Activated T-helper 1 cell treated with anti-CD3 and anti-CD28 coated beads, Interleukin-12 subunit alpha, Interleukin-12 subunit beta, Interleukin-2, Interleukin-4 antibody, amounts not matched to agents 30 ng/mL and 10 ng/mL and 1 ng/mL, durations not matched to agents 14 hours and 24 hours and 36 hours (primary cell): ENCODE measurements at regions of chr1 and their contacts with region 1.

Region 1: GRCh38 chr1:66271216-66271903 is 262.6 kb upstream of the SGIP1 start:
- DNase-seq: no peak
- H3K4me3 Mint-ChIP-seq: peak overlapping the region; percentile 38
- H3K27ac Mint-ChIP-seq: peak overlapping the region; percentile 85
- H3K4me1 Mint-ChIP-seq: peaks cover 67% of the 10 kb centered on the region
- H3K27me3 Mint-ChIP-seq: peaks cover 2% of the 10 kb centered on the region

Region 2: GRCh38 chr1:66253330-66253921 is 17.9 kb before region 1 on chr1:
- intact Hi-C with region 1: loop called (anchors 1 kb)
- DNase-seq: no peak
- H3K4me3 Mint-ChIP-seq: no peak overlapping the region
- H3K27ac Mint-ChIP-seq: no peak overlapping the region
- H3K4me1 Mint-ChIP-seq: peaks cover 68% of the 10 kb centered on the region
- H3K27me3 Mint-ChIP-seq: no peaks in the 10 kb centered on the region

Region 3: DNA sequence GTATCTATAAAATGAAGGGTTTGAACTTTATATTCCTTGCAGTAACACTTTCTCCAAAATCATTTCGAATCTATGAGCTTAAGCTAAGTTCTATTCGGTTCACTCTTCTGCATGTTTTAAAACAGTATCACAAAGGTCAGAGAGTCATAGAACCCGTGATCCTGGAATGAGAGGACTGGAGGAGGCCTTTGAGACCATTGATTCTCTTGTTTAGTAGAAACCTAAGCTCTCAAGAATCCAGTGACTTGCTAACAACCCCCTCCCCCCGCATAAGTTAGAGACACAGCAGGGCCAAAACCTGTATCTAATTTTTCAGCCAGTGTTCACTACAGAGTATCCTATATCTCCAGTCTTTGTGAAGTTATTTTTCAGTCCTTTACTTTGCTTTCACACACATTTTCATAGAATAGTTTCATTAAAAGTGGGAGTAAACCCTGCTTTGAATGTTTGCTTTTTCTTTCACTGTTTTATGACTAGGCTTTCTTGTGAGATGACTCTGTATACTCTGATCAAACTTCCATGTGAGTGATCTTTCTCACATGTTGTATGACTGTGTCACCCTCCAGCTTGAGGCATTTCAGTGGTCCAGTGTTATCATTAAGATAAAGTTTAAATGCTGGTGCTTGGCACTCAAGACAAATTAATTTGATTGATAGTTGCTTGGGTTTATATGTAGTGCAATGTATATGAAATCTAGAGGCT is 12.8 kb before region 1 on chr1:
- intact Hi-C with region 1: loop called (anchors 1 kb)
- DNase-seq: no peak
- H3K4me3 Mint-ChIP-seq: no peak overlapping the region
- H3K27ac Mint-ChIP-seq: peak overlapping the region; percentile 53
- H3K4me1 Mint-ChIP-seq: peaks cover 83% of the 10 kb centered on the region
- H3K27me3 Mint-ChIP-seq: peaks cover 2% of the 10 kb centered on the region

Region 4: DNA sequence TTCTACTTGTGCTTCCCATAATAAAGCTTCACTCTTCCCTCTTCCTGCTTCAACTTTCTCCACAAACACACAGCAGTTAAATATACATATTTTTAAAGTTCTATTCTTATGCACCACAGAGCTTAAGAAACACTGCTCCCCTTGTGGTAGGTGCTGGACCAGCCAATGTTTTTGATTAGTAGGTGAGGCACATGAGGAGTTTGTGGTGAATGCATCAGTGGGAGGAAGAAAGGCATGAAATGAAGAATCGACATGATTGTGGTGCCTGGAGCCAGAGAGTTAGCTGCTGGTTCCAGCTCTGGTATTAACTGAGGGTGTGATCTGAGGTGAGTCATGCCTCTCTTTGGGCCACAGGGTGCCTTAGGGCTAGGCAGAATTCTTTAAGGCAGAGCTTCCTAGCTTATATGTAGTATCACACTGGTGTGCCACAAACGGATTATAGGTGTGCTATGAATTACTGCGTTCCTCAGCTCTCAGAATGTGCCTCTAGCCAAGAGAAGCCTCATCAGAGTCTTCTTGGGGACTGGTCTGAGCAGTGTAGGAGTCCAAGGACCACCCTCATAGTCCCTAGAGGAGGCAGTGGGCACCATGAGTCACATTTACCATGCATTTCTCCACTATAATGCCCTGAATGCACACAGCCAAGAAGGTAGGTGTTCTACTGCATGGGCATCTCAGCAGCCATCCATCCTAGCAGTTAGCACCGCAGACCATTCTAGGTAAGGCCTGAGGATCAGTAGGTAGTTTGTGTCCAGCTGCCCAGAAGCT is 165.2 kb after region 1 on chr1:
- intact Hi-C with region 1: loop called (anchors 1 kb)
- DNase-seq: peak; percentile 34
- H3K4me3 Mint-ChIP-seq: no peak overlapping the region
- H3K27ac Mint-ChIP-seq: peak overlapping the region; percentile 2
- H3K4me1 Mint-ChIP-seq: peaks cover 45% of the 10 kb centered on the region
- H3K27me3 Mint-ChIP-seq: no peaks in the 10 kb centered on the region

Region 5: DNA sequence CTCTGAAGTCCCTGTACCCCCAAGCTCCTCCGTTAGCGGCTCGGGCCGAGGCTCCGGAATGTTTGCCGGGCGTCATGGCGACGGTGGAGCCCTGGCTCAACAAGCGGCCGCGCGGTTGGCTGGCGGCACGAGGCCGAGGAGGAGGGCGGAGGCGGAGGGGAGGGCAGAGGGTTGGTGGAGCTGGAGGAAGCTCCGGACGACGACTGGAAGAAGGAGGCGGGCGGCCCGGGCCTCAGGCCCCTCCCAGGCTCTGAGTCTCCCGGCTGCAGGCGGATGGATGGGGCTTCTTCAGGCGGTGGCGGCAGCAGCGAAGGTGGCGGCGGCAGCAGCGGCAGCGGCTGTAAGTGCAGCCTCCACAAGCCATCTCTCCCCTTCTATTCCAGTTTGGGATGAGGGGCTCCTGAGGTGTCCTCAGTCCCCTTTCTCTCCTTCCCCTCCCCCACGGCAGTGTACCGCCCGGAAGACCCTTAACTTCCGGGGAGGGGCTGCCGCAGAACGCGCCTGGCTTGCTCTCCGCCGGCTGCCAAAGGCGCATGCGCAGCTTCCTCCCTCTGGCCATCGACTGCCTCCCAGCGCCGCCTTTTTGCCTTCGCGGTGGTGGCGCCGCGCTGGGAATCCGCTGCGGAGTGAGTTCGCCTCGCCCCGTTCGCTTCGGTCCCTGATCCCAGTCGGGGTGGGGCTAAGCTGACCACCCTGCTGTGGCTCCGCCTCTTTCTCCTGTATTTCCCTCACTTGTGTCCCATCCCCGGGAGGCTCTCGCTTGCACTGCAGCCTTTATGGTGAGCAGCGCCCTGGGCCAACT is 653.6 kb after region 1 on chr1 and contains the starts of genes DNAI4 and MIER1:
- intact Hi-C with region 1: loop called (anchors 10 kb)
- DNase-seq: peak; percentile 98
- H3K4me3 Mint-ChIP-seq: peak within 1 kb of the TSS; percentile 93
- H3K27ac Mint-ChIP-seq: peak within 1 kb of the TSS; percentile 97
- H3K4me1 Mint-ChIP-seq: peaks cover 66% of the 10 kb centered on the region
- H3K27me3 Mint-ChIP-seq: no peaks in the 10 kb centered on the region
- total RNA-seq, gene DNAI4: 1.2 and 3.2 TPM in 2 replicates
- total RNA-seq, gene MIER1: 53.2 and 57.4 TPM in 2 replicates